Activated B cell treated with CpG ODN at 0.5 μM for 24 hours (primary cell): ENCODE measurements at regions of chr9 and their contacts with region 1.

Region 1: DNA sequence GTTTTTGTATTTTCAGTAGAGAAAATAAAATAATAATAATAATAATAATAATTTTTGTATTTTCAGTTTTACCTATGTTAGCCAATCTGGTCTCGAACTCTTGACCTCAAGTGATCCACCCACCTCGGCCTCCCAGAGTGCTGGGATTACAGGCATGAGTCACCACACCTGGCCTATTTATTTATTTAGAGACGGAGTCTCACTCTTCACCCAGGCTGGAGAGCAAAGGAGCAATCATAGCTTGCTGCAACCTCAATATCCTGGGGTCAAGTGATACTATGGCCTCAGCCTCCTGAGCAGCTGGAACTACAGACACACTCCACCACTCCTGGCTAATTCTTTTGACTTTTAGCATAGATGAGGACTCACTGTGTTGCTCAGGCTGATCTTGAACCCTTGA is 167.5 kb downstream of the TLE1 start:
- DNase-seq: no peak
- ATAC-seq: no peak
- H3K4me3 Mint-ChIP-seq: no peak overlapping the region
- H3K27ac Mint-ChIP-seq: no peak overlapping the region
- H3K4me1 Mint-ChIP-seq: peaks cover 7% of the 10 kb centered on the region
- H3K27me3 Mint-ChIP-seq: peaks cover 5% of the 10 kb centered on the region
- CTCF ChIP-seq: no peak

Region 2: GRCh38 chr9:81351167-81351566 is 170.7 kb before region 1 on chr9:
- CTCF ChIA-PET with region 1: no interaction called
- POLR2A ChIA-PET with region 1: no interaction called
- intact Hi-C with region 1: no loop called
- DNase-seq: no peak
- ATAC-seq: no peak
- H3K4me3 Mint-ChIP-seq: no peak overlapping the region
- H3K27ac Mint-ChIP-seq: no peak overlapping the region
- H3K4me1 Mint-ChIP-seq: no peaks in the 10 kb centered on the region
- H3K27me3 Mint-ChIP-seq: no peaks in the 10 kb centered on the region
- CTCF ChIP-seq: no peak

Region 3: GRCh38 chr9:81671880-81672280 is 150.0 kb after region 1 on chr9:
- CTCF ChIA-PET with region 1: interaction called, 15 read pairs
- POLR2A ChIA-PET with region 1: no interaction called
- intact Hi-C with region 1: no loop called
- DNase-seq: no peak
- ATAC-seq: no peak
- H3K4me3 Mint-ChIP-seq: no peak overlapping the region
- H3K27ac Mint-ChIP-seq: no peak overlapping the region
- H3K4me1 Mint-ChIP-seq: peaks cover 74% of the 10 kb centered on the region
- H3K27me3 Mint-ChIP-seq: no peaks in the 10 kb centered on the region
- CTCF ChIP-seq: no peak

Region 4: DNA sequence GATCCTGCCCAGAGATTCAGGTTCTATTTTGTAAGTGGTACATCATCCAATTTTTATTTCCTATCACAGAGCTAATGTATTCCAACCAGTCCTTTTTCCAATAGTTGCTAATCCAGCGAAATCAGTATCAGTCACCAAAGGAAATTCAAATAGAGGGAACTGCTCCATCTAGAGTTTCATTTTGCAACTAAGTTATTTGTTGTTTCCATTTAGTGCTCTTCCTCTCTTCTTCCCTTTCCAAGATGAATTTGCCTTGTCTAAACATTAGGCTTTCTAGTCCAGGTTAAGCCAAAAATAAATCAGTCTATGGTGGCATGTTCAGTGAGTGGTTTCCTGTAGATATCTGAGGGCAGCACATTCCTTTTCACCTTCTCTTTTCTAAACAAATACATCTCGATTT is 326.6 kb after region 1 on chr9:
- CTCF ChIA-PET with region 1: interaction called, 5 read pairs
- POLR2A ChIA-PET with region 1: no interaction called
- intact Hi-C with region 1: loop called (anchors 5 kb)
- DNase-seq: no peak
- ATAC-seq: no peak
- H3K4me3 Mint-ChIP-seq: no peak overlapping the region
- H3K27ac Mint-ChIP-seq: no peak overlapping the region
- H3K4me1 Mint-ChIP-seq: no peaks in the 10 kb centered on the region
- H3K27me3 Mint-ChIP-seq: no peaks in the 10 kb centered on the region
- CTCF ChIP-seq: no peak

Region 5: GRCh38 chr9:82492274-82492673 is 970.4 kb after region 1 on chr9:
- CTCF ChIA-PET with region 1: no interaction called
- POLR2A ChIA-PET with region 1: no interaction called
- intact Hi-C with region 1: loop called (anchors 2 kb)
- DNase-seq: no peak
- ATAC-seq: no peak
- H3K4me3 Mint-ChIP-seq: no peak overlapping the region
- H3K27ac Mint-ChIP-seq: no peak overlapping the region
- H3K4me1 Mint-ChIP-seq: no peaks in the 10 kb centered on the region
- H3K27me3 Mint-ChIP-seq: no peaks in the 10 kb centered on the region
- CTCF ChIP-seq: no peak

Region 6: DNA sequence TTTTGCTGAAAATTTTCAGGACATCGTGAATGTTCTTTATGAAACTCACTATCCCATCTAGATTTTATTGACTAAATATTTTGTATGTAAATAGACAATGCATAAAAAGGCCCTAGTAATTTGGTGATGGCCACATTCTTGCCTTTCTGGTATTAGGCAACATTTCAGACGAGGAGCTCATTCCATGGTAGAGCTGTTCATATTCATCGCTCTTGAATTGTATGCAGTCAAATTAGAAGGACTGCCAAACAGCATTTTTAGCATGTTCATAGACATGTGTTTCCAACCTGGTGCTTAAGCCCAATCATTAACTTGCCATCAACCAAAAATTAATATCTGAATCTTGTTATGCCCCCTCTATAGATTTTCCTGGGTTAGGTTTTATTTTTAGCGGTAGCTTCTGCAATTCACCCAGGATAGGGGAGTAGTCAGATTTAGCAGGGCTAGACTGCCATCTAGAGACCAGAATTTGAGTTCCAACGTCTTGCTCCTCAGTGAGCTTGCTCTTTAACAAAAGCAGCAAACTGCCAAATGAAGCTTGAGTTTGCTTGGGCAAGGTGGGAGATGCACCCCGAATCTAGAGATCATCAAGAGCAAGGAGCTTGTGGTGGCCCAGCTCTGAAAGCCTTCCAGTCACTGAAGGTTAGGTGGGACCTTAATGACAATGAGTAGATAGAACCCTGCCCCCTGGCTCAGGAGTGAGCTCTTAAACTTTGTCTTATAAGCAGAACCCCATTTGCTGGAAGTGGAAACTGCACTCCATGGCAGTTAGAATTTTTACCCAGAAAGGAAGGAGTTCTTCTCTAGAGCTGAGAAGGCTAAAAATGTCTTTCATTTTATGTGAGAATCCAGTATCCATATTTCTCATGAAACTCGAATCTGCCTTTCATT is 1084.8 kb after region 1 on chr9:
- CTCF ChIA-PET with region 1: interaction called, 73 read pairs
- POLR2A ChIA-PET with region 1: interaction called, 6 read pairs
- intact Hi-C with region 1: loop called (anchors 1 kb)
- DNase-seq: no peak
- ATAC-seq: peak; percentile 45
- H3K4me3 Mint-ChIP-seq: no peak overlapping the region
- H3K27ac Mint-ChIP-seq: no peak overlapping the region
- H3K4me1 Mint-ChIP-seq: no peaks in the 10 kb centered on the region
- H3K27me3 Mint-ChIP-seq: no peaks in the 10 kb centered on the region
- CTCF ChIP-seq: peak; percentile 75

Region 7: GRCh38 chr9:82961504-82962125 is 1439.7 kb after region 1 on chr9:
- CTCF ChIA-PET with region 1: interaction called, 3 read pairs
- POLR2A ChIA-PET with region 1: no interaction called
- intact Hi-C with region 1: loop called (anchors 5 kb)
- DNase-seq: no peak
- ATAC-seq: peak; percentile 60
- H3K4me3 Mint-ChIP-seq: no peak overlapping the region
- H3K27ac Mint-ChIP-seq: no peak overlapping the region
- H3K4me1 Mint-ChIP-seq: no peaks in the 10 kb centered on the region
- H3K27me3 Mint-ChIP-seq: peaks cover 4% of the 10 kb centered on the region
- CTCF ChIP-seq: no peak